Caco-2 (cell line): ENCODE measurements at regions of chr6 and their contacts with region 1.

Region 1: DNA sequence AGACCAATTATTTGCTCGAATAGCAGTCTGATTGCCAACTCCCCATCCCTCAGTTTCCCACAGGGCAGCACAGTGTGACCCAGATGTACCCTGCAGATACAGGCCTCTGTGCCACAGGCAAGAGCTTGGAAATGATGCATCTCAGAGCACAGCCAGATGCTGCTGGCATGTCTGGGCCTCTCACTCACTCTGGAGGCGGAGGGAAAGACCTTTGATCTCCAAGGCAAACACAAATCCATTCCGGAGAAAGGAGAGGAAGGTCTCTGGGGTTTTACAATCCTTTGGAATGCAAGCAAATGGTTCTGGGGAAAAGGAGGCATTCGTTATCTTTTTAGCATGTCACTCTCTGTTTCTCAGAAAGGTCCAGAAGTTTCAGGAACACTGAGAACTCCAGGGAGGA is 74.2 kb downstream of the RIOK1 start:
- DNase-seq: peak; percentile 88 to 92
- H3K4me3 ChIP-seq: no peak overlapping the region
- H3K4me3 Mint-ChIP-seq: no peak overlapping the region
- H3K27ac Mint-ChIP-seq: peak overlapping the region; percentile 93
- H3K4me1 ChIP-seq: peaks cover 71% of the 10 kb centered on the region
- H3K4me1 Mint-ChIP-seq: peaks cover 48% of the 10 kb centered on the region
- H3K27me3 ChIP-seq: no peaks in the 10 kb centered on the region
- H3K27me3 Mint-ChIP-seq: no peaks in the 10 kb centered on the region
- CTCF ChIP-seq: no peak

Region 2: DNA sequence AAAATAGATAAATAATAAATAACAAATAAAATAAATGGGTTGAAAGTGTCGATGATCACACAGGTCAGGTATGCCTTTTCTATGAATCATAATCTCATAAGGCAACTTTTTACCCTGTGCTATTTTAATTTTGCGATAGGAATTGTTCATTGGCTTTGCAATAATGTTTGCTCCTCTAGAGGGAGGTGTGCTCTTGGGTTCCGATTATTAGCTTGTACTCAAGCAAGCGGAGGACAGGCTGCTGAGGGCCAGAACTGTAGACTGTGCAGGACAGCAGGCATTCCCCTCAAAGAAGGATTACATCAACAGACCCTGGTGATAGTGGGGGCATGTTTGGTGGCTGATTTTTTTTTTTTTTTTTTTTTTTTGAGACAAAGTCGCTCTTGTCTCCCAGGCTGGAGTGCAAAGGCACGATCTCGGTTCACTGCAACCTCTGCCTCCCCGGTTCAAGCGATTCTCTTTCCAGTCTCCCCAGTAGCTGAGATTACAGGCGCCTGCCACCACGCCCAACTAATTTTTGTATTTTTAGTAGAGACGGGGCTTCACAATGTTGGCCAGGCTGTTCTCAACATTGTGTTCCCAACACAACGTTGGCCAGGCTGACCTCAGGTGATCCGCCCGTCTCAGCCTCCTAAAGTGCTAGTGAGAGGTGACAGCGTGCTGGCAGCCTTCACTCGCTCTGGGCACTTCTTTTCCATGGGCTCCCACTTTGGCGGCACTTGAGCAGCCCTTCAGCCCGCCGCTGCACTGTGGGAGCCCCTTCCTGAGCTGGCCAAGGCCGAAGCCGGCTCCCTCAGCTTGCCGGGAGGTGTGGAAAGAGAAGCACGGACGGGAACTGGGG is 38.6 kb before region 1 on chr6:
- CTCF ChIA-PET with region 1: interaction called, 4 read pairs
- POLR2A ChIA-PET with region 1: no interaction called
- intact Hi-C with region 1: loop called (anchors 5 kb)
- DNase-seq: peak; percentile 49 to 57
- H3K4me3 ChIP-seq: no peak overlapping the region
- H3K4me3 Mint-ChIP-seq: no peak overlapping the region
- H3K27ac Mint-ChIP-seq: no peak overlapping the region
- H3K4me1 ChIP-seq: peaks cover 8% of the 10 kb centered on the region
- H3K4me1 Mint-ChIP-seq: peaks cover 5% of the 10 kb centered on the region
- H3K27me3 ChIP-seq: no peaks in the 10 kb centered on the region
- H3K27me3 Mint-ChIP-seq: no peaks in the 10 kb centered on the region
- CTCF ChIP-seq: peak; percentile 37 to 54